Endothelial cell of umbilical vein (primary cell): ENCODE measurements at regions of chrX and their contacts with region 1.

Region 1: DNA sequence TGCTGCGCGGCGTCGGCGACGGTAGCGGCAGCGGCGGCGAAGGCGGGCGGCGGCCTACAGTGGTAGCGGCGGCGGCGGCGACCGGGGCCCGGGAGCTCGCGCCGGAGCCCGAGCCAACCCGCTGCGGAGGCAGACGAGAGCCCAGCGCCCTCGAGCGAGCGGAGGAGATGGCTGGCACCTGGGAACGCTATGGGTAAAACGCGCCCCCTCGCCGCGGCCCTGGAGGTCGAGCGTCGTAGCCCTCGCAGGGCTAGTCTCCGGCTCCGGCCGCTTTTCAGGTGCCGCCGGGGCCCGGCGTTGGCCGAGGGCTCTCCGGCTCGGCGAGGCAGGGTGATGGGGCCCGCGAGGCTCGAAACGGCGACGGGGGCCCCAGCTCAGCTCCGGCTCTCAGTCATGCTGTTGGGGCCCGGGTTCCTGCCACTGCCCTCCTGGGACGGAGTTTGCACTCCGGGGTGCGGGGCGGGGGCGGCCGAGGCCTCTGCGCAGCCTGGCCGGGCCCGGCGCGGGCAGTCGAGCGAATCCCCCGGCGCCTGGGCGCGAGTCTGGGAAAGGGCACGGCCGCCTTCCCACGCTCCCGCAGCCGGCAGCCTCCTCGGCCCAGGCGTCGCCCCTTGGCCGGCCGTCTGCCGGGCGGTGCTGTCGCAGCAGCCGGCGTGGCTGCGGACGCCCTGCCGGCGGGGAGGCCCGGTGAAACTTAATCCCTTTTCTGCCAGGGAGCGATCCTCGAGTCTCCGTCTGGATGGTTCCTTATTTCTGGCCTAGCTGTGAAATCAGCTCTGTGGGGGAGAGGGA is 768 bp downstream of the MID2 start:
- DNase-seq: peak; percentile 36
- H3K4me3 ChIP-seq: peak overlapping the region; percentile 50 to 76 (median 54)
- H3K27ac ChIP-seq: peak overlapping the region; percentile 76
- H3K4me1 ChIP-seq: peaks cover 14% of the 10 kb centered on the region
- H3K27me3 ChIP-seq: no peaks in the 10 kb centered on the region
- CTCF ChIP-seq: no peak
- POLR2A ChIP-seq: peak; percentile 2

Region 2: GRCh38 chrX:107814758-107815157 is 11.7 kb before region 1 on chrX:
- CTCF ChIA-PET with region 1: no interaction called
- POLR2A ChIA-PET with region 1: no interaction called
- dilution Hi-C with region 1: no loop called
- intact Hi-C with region 1: no loop called
- DNase-seq: no peak
- H3K4me3 ChIP-seq: no peak overlapping the region
- H3K27ac ChIP-seq: no peak overlapping the region
- H3K4me1 ChIP-seq: no peaks in the 10 kb centered on the region
- H3K27me3 ChIP-seq: no peaks in the 10 kb centered on the region
- CTCF ChIP-seq: no peak
- POLR2A ChIP-seq: no peak

Region 3: DNA sequence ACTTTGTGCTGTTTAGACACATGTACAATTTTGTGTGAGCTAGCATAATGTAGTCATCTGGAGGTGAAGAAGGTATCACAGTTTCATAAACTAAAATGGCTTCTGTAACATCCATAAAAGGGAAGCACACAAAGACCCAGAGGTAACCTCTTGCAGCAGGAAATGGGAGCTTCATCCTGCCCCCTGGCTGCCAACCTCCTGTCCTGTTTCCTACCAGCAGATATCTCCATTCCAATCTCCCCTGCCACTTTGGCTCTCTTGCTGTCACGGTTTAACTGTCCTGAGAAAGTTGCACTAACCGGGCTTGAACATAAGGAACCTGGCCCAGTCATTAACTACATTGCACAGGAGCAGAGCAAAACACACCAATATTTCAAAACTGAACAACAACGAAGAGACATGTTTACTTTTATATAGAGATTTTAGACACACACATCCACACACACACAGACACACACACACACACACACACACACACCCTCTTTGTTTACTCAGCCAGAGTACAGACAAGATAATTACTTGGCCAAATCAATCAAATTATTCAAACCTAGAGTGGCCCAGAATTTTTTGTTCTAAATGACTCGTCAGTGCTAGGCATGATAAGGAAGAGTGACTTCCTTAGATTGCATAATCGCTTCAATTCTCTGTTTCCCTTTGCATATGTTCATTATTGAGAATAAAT is 23.4 kb after region 1 on chrX:
- CTCF ChIA-PET with region 1: no interaction called
- POLR2A ChIA-PET with region 1: no interaction called
- dilution Hi-C with region 1: no loop called
- intact Hi-C with region 1: loop called (anchors 2 kb)
- DNase-seq: peak; percentile 69
- H3K4me3 ChIP-seq: peak overlapping the region in 1 of 3 experiments; percentile 11
- H3K27ac ChIP-seq: peak overlapping the region; percentile 76
- H3K4me1 ChIP-seq: peaks cover 56% of the 10 kb centered on the region
- H3K27me3 ChIP-seq: no peaks in the 10 kb centered on the region
- CTCF ChIP-seq: no peak
- POLR2A ChIP-seq: no peak

Region 4: GRCh38 chrX:107878106-107878505 is 51.7 kb after region 1 on chrX:
- CTCF ChIA-PET with region 1: no interaction called
- POLR2A ChIA-PET with region 1: no interaction called
- dilution Hi-C with region 1: no loop called
- intact Hi-C with region 1: loop called (anchors 10 kb)
- DNase-seq: peak; percentile 37
- H3K4me3 ChIP-seq: no peak overlapping the region
- H3K27ac ChIP-seq: no peak overlapping the region
- H3K4me1 ChIP-seq: peaks cover 11% of the 10 kb centered on the region
- H3K27me3 ChIP-seq: no peaks in the 10 kb centered on the region
- CTCF ChIP-seq: no peak
- POLR2A ChIP-seq: no peak